ENCODE measurements at regions of chr2 and their contacts with region 1.

Region 1: DNA sequence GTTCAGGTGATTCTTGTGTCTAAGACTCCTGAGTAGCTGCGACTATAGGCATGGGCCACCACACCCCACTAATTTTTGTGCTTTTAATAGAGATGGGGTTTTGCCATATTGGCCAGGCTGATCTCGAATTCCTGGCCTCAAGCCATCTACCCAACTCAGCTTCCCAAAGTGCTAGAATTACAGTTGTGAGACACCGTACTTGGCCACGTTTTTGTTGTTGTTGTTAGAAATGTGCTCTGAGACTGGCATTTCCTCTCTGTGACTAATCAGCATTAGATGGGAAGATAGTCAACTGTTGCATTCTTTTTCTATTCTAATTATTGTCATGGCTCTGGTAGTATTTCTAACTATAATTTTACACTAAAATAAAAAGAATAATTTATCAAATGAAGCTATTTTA is 191.7 kb downstream of the CAMKMT start:
- DNase-seq: no peak
- ATAC-seq: no peak
- H3K4me3 ChIP-seq: no peak overlapping the region
- H3K27ac ChIP-seq: no peak overlapping the region
- H3K4me1 ChIP-seq: peaks cover 0 to 8% (median 0%) of the 10 kb centered on the region in 9 donors
- H3K27me3 ChIP-seq: no peaks in the 10 kb centered on the region
- CTCF ChIP-seq: no peak

Region 2: DNA sequence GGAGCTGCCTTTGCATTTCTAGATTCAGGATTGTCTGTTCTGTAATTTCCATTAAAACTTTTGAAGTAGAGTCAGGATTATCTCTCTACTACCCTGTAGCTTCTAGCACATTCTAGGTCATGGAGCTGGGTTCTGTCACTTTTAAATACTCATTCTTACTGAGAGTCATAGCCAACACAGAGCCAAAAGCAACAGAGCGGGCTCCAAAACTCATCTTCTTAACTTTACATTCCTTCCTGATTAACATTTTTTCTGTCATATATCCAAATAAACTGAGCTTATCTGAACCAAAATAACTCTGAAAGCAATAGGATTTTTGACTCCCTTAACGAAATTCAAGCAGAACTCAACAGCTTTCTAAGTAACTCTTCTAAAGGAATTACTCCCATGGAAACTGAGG is 205.1 kb before region 1 on chr2:
- intact Hi-C with region 1: no loop called
- DNase-seq: peak in 1 of 2 donors; percentile 37
- ATAC-seq: peak in 7 of 8 donors; percentile 70 to 88 (median 80)
- H3K4me3 ChIP-seq: peak overlapping the region in 1 of 10 donors; percentile 17
- H3K27ac ChIP-seq: peak overlapping the region in 4 of 10 donors; percentile 1 to 65 (median 34)
- H3K4me1 ChIP-seq: peaks cover 2 to 48% (median 39%) of the 10 kb centered on the region in 9 donors
- H3K27me3 ChIP-seq: no peaks in the 10 kb centered on the region
- CTCF ChIP-seq: no peak

Region 3: DNA sequence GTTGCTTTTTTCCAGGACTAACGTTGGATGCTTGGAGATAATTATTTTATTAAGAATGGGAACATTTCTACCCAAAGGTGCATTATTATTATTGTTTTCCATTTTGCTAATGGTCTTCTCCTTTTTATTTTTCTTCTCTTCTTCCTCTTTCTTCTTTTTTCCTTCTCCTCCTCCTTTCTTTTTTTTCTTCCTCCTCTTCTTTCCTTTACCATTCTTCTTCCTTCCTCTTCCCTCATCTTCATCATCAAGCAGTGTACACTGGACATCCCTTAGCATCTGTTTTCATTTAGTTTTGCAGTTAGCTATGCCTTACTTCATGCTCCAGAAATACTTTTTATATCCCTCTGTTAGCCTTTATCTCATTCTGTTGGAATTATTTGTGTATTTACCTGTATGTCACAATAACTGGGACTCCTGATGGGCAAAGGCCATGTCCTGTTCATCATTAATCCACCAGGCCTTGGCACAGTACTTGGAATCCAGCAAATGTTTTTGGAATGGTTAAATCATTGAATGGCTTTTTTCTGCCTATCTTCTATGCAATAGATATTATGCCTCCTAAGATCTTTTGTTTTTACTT is 29.0 kb before region 1 on chr2:
- intact Hi-C with region 1: loop called in 1 of 10 experiments (anchors 2 kb)
- DNase-seq: no peak
- ATAC-seq: no peak
- H3K4me3 ChIP-seq: no peak overlapping the region
- H3K27ac ChIP-seq: no peak overlapping the region
- H3K4me1 ChIP-seq: no peaks in the 10 kb centered on the region
- H3K27me3 ChIP-seq: no peaks in the 10 kb centered on the region
- CTCF ChIP-seq: no peak

Region 4: DNA sequence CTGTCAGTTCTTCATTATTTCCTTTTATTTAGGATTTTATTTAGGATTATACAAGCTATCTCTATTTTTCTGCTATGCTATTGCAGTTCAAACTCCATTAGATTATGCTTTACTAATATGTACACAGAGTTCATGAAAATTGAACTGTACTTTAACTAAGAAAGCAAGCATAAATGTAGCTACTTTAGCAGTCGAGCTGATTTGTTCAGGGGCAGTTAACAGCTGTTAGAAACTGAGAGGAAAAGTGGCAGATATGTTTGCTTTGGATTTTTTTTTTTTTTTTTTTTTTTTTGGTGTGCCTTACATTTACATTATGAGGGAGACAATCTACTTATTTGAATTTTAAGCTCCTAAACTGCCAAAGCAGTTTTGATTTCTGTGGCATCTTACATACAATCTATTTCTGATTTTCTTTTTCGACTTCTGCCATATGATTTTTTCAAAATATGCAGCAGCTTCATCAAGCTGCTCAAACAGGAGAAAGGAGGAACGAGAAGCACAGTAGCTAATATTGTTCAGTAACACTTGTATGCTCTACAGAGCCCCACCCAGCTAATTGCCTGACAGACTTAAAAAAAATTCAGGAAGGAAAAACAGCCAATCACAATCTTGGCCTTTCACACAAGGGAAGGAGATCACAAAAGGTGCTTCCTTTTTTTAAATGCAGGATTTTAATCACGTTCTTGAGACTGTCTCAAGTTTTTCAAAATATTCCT is 154.6 kb after region 1 on chr2:
- intact Hi-C with region 1: loop called in 1 of 10 experiments (anchors 10 kb)
- DNase-seq: no peak
- ATAC-seq: peak in 4 of 8 donors; percentile 56 to 77 (median 73)
- H3K4me3 ChIP-seq: peak overlapping the region in 1 of 10 donors; percentile 3
- H3K27ac ChIP-seq: no peak overlapping the region
- H3K4me1 ChIP-seq: peaks cover 0 to 17% (median 7%) of the 10 kb centered on the region in 9 donors
- H3K27me3 ChIP-seq: no peaks in the 10 kb centered on the region
- CTCF ChIP-seq: no peak